ENCODE measurements at regions of chr20 and their contacts with region 1.

Region 1: GRCh38 chr20:45290677-45291355 is 15.8 kb upstream of the RBPJL start:
- DNase-seq: peak; percentile 24 to 89
- H3K4me3 ChIP-seq: no peak overlapping the region
- H3K27ac ChIP-seq: no peak overlapping the region
- H3K4me1 ChIP-seq: peaks cover 0 to 4% of the 10 kb centered on the region in 2 donors
- H3K27me3 ChIP-seq: no peaks in the 10 kb centered on the region
- CTCF ChIP-seq: peak; percentile 49 to 74 (median 71)

Region 2: DNA sequence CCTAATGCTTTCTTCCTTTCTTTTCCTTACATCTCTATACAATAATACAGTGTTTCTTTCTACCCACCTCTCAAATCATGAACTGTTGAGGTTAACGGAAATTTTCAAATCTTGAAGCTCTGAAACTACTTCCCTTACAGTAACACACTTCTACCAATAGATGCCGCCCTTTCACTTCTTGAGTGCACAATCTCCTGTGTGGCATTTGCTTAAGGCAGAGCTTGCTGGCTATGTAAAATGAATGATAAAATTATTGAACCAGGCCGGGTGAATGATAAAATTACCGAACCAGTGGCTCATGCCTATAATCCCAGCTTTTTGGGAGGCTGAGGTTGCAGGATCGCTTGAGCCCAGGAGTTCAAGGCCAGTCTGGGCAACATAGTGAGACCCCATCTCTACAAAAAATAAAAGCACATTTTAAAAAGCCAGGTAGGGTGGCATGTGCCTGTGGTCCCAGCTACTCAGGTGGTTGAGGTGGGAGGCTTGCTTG is 246.7 kb before region 1 on chr20:
- intact Hi-C with region 1: loop called (anchors 2 kb)
- DNase-seq: no peak
- H3K4me3 ChIP-seq: no peak overlapping the region
- H3K27ac ChIP-seq: no peak overlapping the region
- H3K4me1 ChIP-seq: no peaks in the 10 kb centered on the region
- H3K27me3 ChIP-seq: no peaks in the 10 kb centered on the region
- CTCF ChIP-seq: peak; percentile 33 to 90 (median 82)

Region 3: DNA sequence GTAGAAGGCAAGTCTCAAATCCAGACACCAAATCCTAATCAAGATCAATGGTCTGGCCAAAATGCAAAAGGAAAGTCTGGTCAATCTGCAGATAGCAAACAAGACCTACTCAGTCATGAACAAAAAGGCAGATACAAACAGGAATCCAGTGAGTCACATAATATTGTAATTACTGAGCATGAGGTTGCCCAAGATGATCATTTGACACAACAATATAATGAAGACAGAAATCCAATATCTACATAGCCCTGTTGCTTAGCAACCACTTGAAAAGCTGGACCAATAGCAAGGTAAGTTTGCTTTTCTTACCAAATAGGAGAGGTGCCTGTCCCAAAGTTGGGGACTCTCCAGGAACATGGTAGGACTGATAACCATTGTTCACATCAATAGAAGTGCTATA is 67.7 kb before region 1 on chr20:
- intact Hi-C with region 1: no loop called
- DNase-seq: no peak
- H3K4me3 ChIP-seq: no peak overlapping the region
- H3K27ac ChIP-seq: no peak overlapping the region
- H3K4me1 ChIP-seq: no peaks in the 10 kb centered on the region
- H3K27me3 ChIP-seq: no peaks in the 10 kb centered on the region
- CTCF ChIP-seq: no peak

Region 4: GRCh38 chr20:45329510-45330319 is 38.9 kb after region 1 on chr20:
- intact Hi-C with region 1: no loop called
- DNase-seq: no peak
- H3K4me3 ChIP-seq: no peak overlapping the region
- H3K27ac ChIP-seq: no peak overlapping the region
- H3K4me1 ChIP-seq: no peaks in the 10 kb centered on the region
- H3K27me3 ChIP-seq: no peaks in the 10 kb centered on the region
- CTCF ChIP-seq: no peak